ENCODE measurements at regions of chr1 and their contacts with region 1.

Region 1: GRCh38 chr1:34162852-34163766 is 1.9 kb downstream of the CSMD2 start:
- DNase-seq: peak; percentile 32
- H3K4me3 ChIP-seq: peak overlapping the region; percentile 13 to 37
- H3K27ac ChIP-seq: no peak overlapping the region
- H3K4me1 ChIP-seq: peaks cover 6% of the 10 kb centered on the region
- H3K27me3 ChIP-seq: peaks cover 23% of the 10 kb centered on the region
- CTCF ChIP-seq: peak; percentile 23 to 55 (median 38)
- POLR2A ChIP-seq: no peak

Region 2: DNA sequence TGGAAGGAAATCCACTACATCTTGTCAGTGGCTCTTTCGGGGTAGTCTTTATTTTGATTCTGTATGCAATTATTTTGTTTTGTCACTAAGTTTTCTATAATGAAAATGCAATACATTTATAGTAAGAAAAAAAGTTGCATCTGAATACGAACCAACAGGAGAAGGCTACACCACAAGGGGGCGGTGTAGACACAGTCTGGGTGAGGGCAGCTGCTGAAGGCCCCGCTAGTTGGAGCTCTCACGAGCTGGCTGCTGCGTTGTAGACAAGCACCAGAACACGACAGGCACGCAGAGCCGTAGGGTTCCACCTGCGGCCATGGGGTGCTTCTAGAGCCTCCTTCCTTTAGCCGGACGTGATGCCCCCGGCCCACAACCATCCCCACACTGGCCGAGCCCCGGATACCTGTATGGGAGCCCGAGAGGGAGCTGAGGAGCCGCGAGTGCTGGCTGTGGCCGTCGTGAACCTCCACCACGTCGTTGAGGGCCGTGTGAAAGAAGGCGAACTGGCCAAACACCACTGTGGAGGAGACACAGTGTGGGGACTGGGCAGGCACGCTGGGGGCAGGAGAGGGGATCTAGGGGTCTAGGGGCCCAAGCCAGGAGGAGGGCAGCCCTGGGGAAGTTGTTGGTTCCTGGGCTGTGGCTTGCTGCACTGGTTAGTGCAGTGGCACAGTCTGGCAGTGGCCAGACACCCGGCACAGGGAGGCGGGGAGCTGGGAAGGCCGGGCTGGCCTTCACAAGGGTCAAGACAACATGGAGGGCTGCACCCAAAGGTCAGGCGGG is 529.9 kb before region 1 on chr1:
- intact Hi-C with region 1: loop called (anchors 5 kb)
- DNase-seq: peak; percentile 89
- H3K4me3 ChIP-seq: no peak overlapping the region
- H3K27ac ChIP-seq: no peak overlapping the region
- H3K4me1 ChIP-seq: no peaks in the 10 kb centered on the region
- H3K27me3 ChIP-seq: no peaks in the 10 kb centered on the region
- CTCF ChIP-seq: peak; percentile 86 to 96 (median 92)
- POLR2A ChIP-seq: no peak

Region 3: DNA sequence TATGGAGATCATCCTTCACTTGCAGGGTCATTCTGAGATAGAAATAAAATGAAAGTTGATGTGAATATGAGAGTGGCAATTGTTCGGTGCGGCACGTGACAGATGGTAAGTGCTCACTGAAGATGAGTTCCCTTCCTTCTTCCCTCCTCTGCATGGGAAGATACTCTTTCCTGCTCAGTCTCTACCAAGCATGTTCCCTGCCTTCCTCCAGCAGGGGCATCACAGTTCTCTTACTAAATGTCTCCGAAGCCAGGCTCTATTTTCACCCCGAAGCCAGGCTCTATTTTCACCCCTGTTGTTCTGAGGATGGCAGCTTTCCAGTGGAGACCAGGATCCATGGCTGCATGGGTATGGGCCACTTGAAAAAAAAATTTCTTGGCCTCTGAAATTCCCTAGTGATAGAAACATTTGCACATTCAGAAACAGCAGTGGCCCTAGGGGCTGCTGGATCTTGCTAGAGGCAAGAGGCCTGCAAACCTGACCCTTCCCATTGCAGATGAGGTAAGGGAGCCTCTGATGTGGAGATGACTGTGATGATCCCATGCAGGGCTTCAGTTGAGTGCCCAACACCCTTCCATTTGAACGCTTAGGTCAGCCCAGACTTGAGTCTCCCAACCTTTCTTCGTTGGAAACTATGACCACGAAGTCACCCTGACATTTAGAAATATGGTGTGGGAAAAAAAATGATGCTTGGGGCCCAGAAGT is 422.9 kb before region 1 on chr1:
- intact Hi-C with region 1: loop called (anchors 10 kb)
- DNase-seq: no peak
- H3K4me3 ChIP-seq: no peak overlapping the region
- H3K27ac ChIP-seq: no peak overlapping the region
- H3K4me1 ChIP-seq: no peaks in the 10 kb centered on the region
- H3K27me3 ChIP-seq: no peaks in the 10 kb centered on the region
- CTCF ChIP-seq: no peak
- POLR2A ChIP-seq: no peak

Region 4: DNA sequence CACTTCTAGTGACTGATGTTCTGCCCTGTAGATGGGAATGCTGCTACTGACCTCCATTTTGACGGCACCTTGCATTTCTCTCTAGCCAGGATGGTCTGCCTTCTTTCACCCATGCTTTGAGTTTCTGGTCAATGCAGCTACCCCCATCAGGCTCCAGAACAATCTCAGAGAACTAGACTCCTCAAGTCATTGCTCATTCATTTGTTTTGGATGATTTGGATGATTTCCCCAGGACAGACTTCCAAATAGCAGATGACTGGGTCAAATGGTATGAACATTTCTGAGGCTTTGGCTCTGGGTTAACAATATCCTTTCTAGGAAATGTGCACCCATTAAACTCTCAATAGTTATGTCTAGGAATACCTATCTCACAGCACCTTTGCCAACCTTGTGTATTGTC is 62.0 kb before region 1 on chr1:
- intact Hi-C with region 1: no loop called
- DNase-seq: no peak
- H3K4me3 ChIP-seq: no peak overlapping the region
- H3K27ac ChIP-seq: no peak overlapping the region
- H3K4me1 ChIP-seq: no peaks in the 10 kb centered on the region
- H3K27me3 ChIP-seq: no peaks in the 10 kb centered on the region
- CTCF ChIP-seq: no peak
- POLR2A ChIP-seq: no peak

Measured in prostate gland (tissue), 2 donors.